MCF 10A (cell line): ENCODE measurements at regions of chr12 and their contacts with region 1.

Region 1: DNA sequence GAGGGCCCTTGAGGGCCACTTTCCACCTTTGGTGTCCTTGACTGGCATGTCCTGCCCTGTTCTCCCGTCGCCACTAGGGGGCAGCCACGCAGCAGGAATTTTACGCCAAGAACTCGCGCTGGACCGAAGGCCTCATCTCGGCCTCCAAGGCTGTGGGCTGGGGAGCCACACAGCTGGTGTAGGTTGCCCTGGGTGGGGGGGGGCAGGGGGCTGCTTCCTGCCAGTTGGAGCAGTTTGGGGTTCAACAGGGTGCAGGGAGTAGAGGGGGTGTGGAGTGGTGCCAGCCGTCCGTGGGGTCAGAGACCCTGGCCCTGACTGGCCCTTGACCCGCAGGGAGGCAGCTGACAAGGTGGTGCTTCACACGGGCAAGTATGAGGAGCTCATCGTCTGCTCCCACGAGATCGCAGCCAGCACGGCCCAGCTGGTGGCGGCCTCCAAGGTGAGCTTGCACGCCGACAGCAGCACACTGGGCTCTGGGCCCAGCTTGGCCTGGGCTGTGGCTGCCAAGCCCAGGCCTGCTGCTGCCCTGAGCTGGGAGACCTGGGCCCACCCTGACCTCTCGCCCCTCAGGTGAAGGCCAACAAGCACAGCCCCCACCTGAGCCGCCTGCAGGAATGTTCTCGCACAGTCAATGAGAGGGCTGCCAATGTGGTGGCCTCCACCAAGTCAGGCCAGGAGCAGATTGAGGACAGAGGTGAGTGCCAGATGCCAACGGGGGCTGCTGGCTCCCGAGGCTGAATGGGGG is 25.3 kb downstream of the HIP1R start:
- DNase-seq: peak; percentile 79
- H3K4me3 Mint-ChIP-seq: no peak overlapping the region
- H3K27ac Mint-ChIP-seq: no peak overlapping the region
- H3K4me1 Mint-ChIP-seq: peaks cover 6% of the 10 kb centered on the region
- H3K27me3 Mint-ChIP-seq: no peaks in the 10 kb centered on the region
- CTCF ChIP-seq: peak; percentile 85

Region 2: DNA sequence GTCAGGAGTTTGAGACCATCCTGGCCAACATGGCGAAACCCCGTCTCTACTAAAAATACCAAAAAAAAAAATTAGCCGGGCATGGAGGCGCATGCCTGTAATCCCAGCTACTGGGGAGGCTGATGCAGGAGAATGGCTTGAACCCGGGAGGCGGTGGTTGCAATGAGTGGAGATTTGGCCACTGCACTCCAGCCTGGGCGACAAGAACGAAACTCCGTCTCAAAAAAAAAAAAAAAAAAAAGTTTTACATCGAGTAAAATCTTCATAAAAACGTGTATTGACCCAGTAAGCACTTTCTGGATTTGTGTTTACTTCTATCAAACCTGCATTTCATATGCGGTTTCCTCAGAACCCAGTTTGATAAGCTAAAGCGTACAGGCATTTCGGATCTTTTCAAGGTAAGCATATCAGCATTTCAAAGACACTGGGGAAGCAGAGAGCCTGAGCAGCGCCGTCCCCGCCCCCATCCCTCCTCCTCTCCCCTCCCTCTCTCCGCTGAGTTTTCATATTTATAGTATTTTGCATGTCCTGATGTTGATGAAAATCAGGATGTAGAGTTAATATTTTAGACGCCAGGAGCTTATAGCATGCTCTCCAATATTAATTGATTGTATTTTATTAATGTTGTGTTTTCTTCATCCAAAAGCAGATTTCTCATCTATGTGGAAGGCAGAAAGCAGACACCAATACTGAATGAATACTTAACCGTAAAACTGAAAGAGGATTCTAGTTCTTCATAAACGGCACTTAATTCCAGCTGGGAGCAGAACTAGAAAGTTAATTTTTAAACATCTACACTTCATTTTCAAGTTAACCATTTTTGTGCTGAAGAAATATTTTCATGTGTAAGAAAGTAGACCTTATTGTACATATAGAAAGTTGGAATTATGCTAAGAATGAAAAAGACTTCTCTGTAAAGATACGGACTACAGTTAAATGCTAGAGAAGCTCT is 34.5 kb before region 1 on chr12:
- CTCF ChIA-PET with region 1: interaction called, 20 read pairs
- POLR2A ChIA-PET with region 1: no interaction called
- intact Hi-C with region 1: no loop called
- DNase-seq: no peak
- H3K4me3 Mint-ChIP-seq: peak overlapping the region; percentile 67
- H3K27ac Mint-ChIP-seq: no peak overlapping the region
- H3K4me1 Mint-ChIP-seq: peaks cover 12% of the 10 kb centered on the region
- H3K27me3 Mint-ChIP-seq: no peaks in the 10 kb centered on the region
- CTCF ChIP-seq: no peak

Region 3: DNA sequence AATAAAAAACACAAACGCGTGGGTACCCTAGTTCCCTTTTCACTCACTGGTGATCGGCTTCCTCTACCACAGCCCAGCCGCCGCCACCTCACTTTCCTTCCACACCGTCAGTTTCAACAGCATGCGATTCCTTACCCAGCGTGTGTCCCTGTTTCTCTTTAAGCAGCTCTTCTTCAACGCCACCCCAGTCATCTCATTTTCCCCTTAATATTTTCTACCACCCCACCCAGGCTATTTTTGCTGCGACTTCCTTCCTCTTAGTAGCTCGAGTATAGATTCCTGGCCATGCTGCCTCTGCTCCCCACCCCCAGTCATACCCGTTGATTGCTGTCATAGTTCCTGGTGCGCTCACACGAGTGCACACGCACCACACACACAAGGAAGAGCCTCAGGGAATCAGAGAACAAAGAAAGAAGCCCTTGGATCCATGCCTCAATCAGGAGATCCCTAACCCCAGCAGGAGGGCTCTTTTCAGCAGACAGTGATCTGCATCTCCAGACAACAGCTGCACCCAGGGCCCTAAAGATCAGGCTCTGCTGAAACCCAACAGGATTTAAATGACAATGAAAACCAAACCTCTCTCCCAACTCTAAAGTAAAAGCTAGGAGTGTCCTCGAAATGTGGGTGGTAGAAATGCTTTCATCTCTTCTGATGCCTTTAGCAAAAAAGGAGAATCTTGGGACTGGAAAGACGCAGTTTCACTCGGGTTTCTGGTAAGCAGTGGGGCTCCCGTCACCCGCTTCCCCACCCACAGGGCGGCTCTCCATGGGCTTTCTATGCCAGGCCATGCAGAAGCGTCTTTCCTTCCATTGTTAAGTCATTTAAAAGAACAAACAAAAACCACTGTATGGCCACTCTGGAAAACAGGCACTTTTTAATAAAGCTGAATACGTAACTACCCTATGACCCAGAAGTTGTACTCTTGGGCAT is 11.6 kb after region 1 on chr12:
- CTCF ChIA-PET with region 1: interaction called, 14 read pairs
- POLR2A ChIA-PET with region 1: interaction called, 3 read pairs
- intact Hi-C with region 1: no loop called
- DNase-seq: no peak
- H3K4me3 Mint-ChIP-seq: peak overlapping the region; percentile 54
- H3K27ac Mint-ChIP-seq: peak overlapping the region; percentile 84
- H3K4me1 Mint-ChIP-seq: peaks cover 35% of the 10 kb centered on the region
- H3K27me3 Mint-ChIP-seq: no peaks in the 10 kb centered on the region
- CTCF ChIP-seq: no peak

Region 4: GRCh38 chr12:122951979-122952892 is 91.7 kb after region 1 on chr12:
- CTCF ChIA-PET with region 1: interaction called, 230 read pairs
- POLR2A ChIA-PET with region 1: interaction called, 10 read pairs
- intact Hi-C with region 1: loop called (anchors 1 kb)
- DNase-seq: peak; percentile 81
- H3K4me3 Mint-ChIP-seq: no peak overlapping the region
- H3K27ac Mint-ChIP-seq: no peak overlapping the region
- H3K4me1 Mint-ChIP-seq: peaks cover 8% of the 10 kb centered on the region
- H3K27me3 Mint-ChIP-seq: no peaks in the 10 kb centered on the region
- CTCF ChIP-seq: peak; percentile 87

Region 5: GRCh38 chr12:123006977-123007376 is 146.5 kb after region 1 on chr12:
- CTCF ChIA-PET with region 1: no interaction called
- POLR2A ChIA-PET with region 1: no interaction called
- intact Hi-C with region 1: no loop called
- DNase-seq: no peak
- H3K4me3 Mint-ChIP-seq: no peak overlapping the region
- H3K27ac Mint-ChIP-seq: no peak overlapping the region
- H3K4me1 Mint-ChIP-seq: no peaks in the 10 kb centered on the region
- H3K27me3 Mint-ChIP-seq: no peaks in the 10 kb centered on the region
- CTCF ChIP-seq: no peak